Activated CD8-positive, alpha-beta T cell treated with anti-CD3 and anti-CD28 coated beads for 36 hours (primary cell): ENCODE measurements at regions of chr7 and their contacts with region 1.

Region 1: GRCh38 chr7:105141068-105141467 is 127.1 kb downstream of the KMT2E start:
- DNase-seq: no peak
- ATAC-seq: no peak
- H3K4me3 Mint-ChIP-seq: no peak overlapping the region
- H3K27ac Mint-ChIP-seq: no peak overlapping the region
- H3K4me1 Mint-ChIP-seq: peaks cover 2% of the 10 kb centered on the region
- H3K27me3 Mint-ChIP-seq: no peaks in the 10 kb centered on the region
- CTCF ChIP-seq: no peak

Region 2: GRCh38 chr7:104825099-104825498 is 316.0 kb before region 1 on chr7:
- CTCF ChIA-PET with region 1: no interaction called
- POLR2A ChIA-PET with region 1: no interaction called
- intact Hi-C with region 1: no loop called
- DNase-seq: no peak
- ATAC-seq: peak; percentile 49
- H3K4me3 Mint-ChIP-seq: no peak overlapping the region
- H3K27ac Mint-ChIP-seq: no peak overlapping the region
- H3K4me1 Mint-ChIP-seq: no peaks in the 10 kb centered on the region
- H3K27me3 Mint-ChIP-seq: no peaks in the 10 kb centered on the region
- CTCF ChIP-seq: no peak

Region 3: DNA sequence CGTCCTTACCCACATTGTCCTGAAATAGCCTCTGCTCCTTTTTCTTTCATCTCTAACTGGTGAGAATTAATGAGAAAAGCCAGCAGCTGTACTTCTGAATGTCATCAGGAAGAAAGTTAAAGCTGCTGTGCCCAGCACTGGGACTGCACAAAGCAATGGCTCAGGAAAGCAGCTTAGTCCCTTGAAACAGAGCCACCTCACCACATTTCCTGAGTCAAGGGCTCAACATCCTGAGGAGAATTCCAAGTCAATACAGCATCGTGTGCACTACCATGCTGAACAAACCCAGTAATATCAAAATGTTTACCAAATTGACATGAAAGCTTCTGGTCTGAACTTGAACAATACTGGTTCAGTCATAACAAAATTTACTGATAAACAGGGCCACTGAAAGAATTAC is 13.0 kb after region 1 on chr7:
- CTCF ChIA-PET with region 1: interaction called, 11 read pairs
- POLR2A ChIA-PET with region 1: no interaction called
- intact Hi-C with region 1: no loop called
- DNase-seq: no peak
- ATAC-seq: no peak
- H3K4me3 Mint-ChIP-seq: no peak overlapping the region
- H3K27ac Mint-ChIP-seq: no peak overlapping the region
- H3K4me1 Mint-ChIP-seq: peaks cover 27% of the 10 kb centered on the region
- H3K27me3 Mint-ChIP-seq: no peaks in the 10 kb centered on the region
- CTCF ChIP-seq: no peak

Region 4: DNA sequence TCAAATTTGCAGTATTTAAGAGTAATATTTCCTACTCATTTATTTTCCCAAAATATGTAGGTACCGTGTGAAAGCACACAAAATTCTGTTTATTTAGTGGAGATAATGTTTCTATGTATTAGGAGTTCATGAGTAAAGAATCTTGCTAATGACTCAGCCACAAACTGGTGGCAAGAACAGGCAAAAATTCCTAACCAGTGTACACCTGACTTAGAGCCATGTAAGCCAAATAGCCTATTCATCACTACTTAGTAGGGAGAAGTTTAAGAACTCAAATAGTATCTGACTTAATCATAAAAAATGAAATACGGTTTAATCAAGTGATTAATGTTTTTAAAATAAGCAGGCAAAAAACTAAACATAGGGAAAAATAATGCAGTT is 78.7 kb after region 1 on chr7:
- CTCF ChIA-PET with region 1: no interaction called
- POLR2A ChIA-PET with region 1: no interaction called
- intact Hi-C with region 1: no loop called
- DNase-seq: no peak
- ATAC-seq: no peak
- H3K4me3 Mint-ChIP-seq: no peak overlapping the region
- H3K27ac Mint-ChIP-seq: no peak overlapping the region
- H3K4me1 Mint-ChIP-seq: peaks cover 31% of the 10 kb centered on the region
- H3K27me3 Mint-ChIP-seq: no peaks in the 10 kb centered on the region
- CTCF ChIP-seq: no peak